Dendritic cell treated with granulocyte-macrophage colony-stimulating factor and Interleukin-4, amounts not matched to agents 40 ng/mL and 50 ng/mL, for 4 days (primary cell): ENCODE measurements at regions of chr5 and their contacts with region 1.

Region 1: GRCh38 chr5:172714491-172715421 is 56.2 kb downstream of the DUSP1 start:
- H3K4me3 Mint-ChIP-seq: no peak overlapping the region
- H3K27ac Mint-ChIP-seq: peak overlapping the region; percentile 67
- H3K4me1 Mint-ChIP-seq: peaks cover 23% of the 10 kb centered on the region
- H3K27me3 Mint-ChIP-seq: peaks cover 20% of the 10 kb centered on the region

Region 2: DNA sequence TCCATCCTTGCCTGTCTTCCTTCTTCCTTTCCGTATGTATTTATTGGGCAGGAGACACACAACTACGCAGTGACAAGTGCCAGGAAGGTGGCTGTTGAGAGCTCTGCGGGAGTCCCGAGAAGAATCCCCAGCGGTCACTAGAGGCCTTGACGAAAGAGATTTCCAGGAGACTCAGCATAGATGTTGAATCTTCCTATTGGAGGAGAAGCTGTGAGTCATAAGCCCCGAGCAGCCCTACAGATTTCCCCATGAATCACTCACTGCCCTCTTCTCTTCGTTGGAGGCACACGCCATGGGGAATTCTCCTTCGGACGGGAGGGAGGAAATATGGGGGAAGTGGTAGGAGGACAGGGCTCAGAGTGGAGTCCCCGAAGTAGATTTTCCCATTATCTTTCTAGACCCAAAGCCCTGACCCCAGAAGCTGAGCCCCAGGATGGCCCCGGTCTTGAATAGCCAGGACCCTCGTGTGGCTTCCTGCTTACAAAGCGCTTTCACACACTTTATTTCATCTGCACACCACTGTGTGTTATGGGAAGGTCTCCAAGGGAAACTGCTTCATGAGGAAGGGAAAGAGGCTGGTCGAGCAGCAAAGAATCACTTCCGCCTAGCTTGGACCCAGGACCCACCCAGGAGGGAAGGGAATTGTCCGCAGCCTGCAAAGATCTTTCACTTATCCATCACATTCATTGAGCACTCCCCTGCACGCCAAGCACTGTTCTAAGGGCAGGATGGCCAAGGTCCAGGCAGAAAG is 43.5 kb after region 1 on chr5:
- intact Hi-C with region 1: loop called (anchors 2 kb)
- H3K4me3 Mint-ChIP-seq: peak overlapping the region; percentile 44
- H3K27ac Mint-ChIP-seq: peak overlapping the region; percentile 91
- H3K4me1 Mint-ChIP-seq: peaks cover 39% of the 10 kb centered on the region
- H3K27me3 Mint-ChIP-seq: peaks cover 4% of the 10 kb centered on the region

Region 3: DNA sequence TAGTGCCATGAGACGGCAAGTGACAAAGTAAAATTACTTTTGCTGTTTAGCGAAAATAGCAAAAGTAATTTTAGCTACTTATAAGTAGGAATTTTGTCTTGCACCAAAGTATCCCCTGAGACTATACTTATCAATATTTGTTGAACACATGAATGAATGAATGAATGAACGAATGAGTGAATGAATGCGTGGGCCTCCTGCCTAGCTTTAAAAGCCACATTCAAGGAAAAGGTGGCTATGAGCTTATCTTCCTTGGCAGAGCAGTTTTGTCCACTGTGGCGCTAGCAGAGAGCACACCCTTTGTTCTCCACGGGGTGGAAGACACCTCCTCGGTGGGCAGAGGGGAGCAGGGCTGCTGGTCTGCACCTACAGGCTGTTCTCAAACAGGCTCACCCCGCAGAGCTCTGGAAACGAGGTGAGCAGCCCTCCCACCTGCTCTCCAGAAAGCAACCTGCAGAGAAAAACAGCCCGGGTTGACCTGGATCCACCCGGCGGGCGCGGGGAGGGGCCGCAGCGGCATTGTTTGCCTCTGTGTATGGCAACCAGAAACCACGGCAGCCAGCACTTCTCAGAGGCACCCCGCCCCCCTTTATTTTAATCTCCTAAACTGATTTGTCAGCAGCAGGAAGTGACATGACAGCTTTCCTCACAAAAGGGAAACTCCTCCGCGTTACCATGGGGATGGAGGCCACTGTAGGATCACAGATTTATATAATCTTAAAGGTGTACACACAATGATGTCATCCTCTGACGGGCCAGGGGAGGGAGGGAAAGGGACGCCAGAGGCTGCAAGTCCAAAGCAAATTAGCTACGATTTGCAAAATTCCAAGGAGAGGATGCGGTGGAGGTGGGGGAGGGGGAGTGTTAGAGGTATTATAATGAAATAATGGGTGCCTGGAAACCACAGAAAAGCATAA is 50.4 kb after region 1 on chr5:
- intact Hi-C with region 1: loop called (anchors 2 kb)
- H3K4me3 Mint-ChIP-seq: peak overlapping the region; percentile 73
- H3K27ac Mint-ChIP-seq: peak overlapping the region; percentile 100
- H3K4me1 Mint-ChIP-seq: peaks cover 64% of the 10 kb centered on the region
- H3K27me3 Mint-ChIP-seq: peaks cover 2% of the 10 kb centered on the region

Region 4: DNA sequence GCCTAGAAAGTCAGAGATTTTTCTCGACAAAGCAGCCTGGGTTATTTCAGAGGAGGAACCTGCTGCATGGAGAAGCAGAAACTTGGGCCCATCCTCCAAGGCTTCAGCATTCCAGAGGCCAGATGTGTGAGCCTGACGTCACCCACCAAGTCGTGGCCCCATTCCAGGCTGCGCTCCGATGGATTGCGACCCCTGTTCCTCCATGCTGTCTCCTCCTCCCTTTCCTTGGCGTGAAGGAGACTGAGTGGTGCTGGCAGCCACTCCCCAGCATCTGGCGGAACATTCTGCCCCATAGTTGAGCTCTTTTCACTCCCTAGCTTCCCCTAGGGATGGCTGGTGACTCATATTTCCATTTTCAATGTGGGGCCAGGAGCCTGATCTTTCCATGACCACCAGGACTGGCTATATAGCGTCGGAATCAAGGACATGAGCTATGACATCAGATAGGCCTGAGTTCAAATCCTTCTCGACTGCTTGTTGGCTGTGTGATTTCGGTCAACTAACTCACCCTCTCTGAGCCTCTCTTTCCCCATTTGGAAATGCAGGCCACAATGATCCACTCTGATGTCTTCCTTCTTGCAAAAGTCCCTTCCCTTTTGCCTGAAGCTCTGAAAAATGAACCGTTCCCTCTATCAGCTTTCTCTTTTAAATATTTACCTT is 80.7 kb after region 1 on chr5:
- intact Hi-C with region 1: no loop called
- H3K4me3 Mint-ChIP-seq: no peak overlapping the region
- H3K27ac Mint-ChIP-seq: peak overlapping the region; percentile 91
- H3K4me1 Mint-ChIP-seq: peaks cover 93% of the 10 kb centered on the region
- H3K27me3 Mint-ChIP-seq: no peaks in the 10 kb centered on the region

Region 5: GRCh38 chr5:172910828-172911627 is 196.3 kb after region 1 on chr5:
- intact Hi-C with region 1: loop called (anchors 1 kb)
- H3K4me3 Mint-ChIP-seq: no peak overlapping the region
- H3K27ac Mint-ChIP-seq: peak overlapping the region; percentile 71
- H3K4me1 Mint-ChIP-seq: peaks cover 24% of the 10 kb centered on the region
- H3K27me3 Mint-ChIP-seq: no peaks in the 10 kb centered on the region

Region 6: DNA sequence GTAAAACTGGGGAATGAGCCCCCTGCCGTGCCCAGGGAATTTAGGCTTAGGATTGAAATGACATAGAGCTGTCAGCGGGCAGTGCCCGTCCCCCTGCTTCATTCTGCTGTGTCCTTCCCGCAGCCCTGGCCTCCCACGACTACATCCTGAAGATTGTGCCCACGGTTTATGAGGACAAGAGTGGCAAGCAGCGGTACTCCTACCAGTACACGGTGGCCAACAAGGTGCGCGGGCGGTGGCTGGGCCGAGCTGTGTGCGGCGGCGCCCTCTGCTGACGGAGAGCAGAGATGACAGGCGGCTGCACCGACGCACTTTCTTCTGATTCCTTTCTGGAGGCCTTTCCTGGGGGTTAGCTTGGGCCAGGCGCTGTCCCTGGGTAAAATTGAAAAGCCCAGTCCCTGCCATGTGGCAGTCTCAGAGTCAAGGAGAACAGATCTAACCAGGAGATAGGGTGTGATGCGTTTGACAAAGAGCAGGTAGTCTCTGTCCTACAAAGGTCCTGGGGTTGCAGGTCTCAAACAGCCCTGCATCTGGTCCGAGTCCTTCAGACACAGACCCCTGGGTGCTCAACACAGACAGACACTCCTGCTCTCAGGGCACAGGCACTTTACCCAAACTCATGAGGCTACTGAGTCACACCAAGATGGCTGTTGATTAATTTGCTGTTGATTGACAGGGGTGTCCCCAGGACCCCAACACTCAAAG is 217.7 kb after region 1 on chr5:
- intact Hi-C with region 1: loop called (anchors 1 kb)
- H3K4me3 Mint-ChIP-seq: no peak overlapping the region
- H3K27ac Mint-ChIP-seq: no peak overlapping the region
- H3K4me1 Mint-ChIP-seq: peaks cover 14% of the 10 kb centered on the region
- H3K27me3 Mint-ChIP-seq: no peaks in the 10 kb centered on the region

Region 7: DNA sequence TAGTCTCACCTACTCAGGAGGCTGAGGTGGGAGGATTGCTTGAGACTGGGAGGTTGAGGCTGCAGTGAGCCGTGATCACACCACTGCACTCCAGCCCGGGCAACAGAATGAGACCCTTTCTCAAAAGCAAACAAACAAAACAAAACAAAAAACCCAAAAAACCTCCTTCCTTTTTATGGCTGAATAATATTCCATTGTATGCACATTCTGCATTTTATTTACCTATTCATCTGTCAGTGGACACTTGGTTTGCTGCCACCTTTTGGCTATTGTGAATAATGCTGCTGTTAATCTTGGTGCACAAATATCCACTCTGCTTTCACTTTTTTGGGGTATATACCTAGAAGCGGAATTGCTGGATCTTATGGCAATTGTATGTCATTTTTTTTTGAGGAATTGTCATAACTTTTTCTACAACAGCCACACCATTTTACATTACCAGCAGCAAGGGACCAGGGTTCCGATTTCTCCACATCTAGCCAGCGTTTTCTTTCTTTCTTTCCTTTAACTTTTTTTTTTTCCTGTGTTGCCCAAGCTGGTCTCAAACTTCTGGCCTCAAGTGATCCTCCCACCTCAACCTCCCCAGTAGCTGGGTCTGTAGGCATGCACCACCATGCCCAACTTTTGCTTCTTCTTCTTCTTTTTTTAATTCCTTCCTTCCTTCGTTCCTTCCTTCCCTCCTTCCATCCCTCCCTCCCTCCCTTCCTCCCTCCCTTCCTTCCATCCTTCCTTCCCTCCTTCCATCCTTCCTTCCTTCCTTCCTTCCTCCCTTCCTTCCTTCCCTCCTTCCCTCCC is 489.6 kb after region 1 on chr5:
- intact Hi-C with region 1: loop called (anchors 5 kb)
- H3K4me3 Mint-ChIP-seq: no peak overlapping the region
- H3K27ac Mint-ChIP-seq: no peak overlapping the region
- H3K4me1 Mint-ChIP-seq: no peaks in the 10 kb centered on the region
- H3K27me3 Mint-ChIP-seq: peaks cover 57% of the 10 kb centered on the region